ENCODE measurements at regions of chr3 and their contacts with region 1.

Region 1: GRCh38 chr3:150408221-150409102 is at the start of gene TSC22D2:
- DNase-seq: peak; percentile 93
- ATAC-seq: peak; percentile 73
- H3K4me3 Mint-ChIP-seq: peak within 1 kb of the TSS; percentile 84
- H3K27ac Mint-ChIP-seq: peak within 1 kb of the TSS; percentile 99
- H3K4me1 Mint-ChIP-seq: peaks cover 19% of the 10 kb centered on the region
- H3K27me3 Mint-ChIP-seq: no peaks in the 10 kb centered on the region
- CTCF ChIP-seq: no peak
- total RNA-seq, gene TSC22D2: 12.3 to 16.7 TPM

Region 2: DNA sequence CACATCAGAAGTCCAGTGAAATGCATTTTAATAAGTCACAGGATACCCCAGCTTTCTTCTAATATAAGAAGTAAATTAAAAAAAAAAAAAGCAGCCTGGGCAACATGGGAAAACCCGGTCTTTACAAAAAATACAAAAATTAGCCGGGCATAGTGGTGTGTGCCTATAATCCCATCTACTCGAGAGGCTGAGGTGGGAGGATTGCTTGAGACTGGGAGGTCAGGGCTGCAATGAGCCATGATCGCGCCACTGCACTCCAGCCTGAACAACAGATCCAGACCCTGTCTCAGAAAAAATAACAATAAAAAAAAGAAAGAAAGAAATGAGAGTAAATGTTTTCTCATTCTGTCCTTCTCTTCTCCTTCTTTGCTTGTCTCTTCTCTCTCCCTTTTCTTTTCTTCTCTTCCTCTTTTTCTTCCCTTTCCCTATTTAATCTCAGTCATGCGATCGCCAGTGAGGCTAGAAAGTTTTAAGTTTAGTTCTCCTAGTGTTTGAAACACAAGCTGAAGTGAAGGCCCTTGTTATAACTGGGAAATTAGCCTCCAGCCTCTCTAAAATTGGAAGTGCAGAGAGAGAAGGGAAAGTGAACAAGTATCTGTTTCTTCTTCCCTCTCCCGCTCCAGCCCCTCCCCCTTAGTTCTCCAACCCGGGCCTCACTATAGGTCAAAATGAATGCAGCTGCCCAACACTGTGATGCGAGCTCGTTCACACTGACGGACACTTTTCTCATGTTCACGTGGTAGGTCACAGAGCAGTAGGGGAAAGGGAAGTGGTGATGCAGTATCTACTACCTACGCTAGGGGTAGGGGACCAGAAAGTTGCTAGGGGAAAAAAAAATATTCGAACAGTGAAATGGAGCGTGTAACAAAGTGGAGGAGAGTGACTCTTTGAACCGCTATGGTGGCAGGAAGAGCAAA is 23.9 kb before region 1 on chr3:
- CTCF ChIA-PET with region 1: interaction called, 20 read pairs
- POLR2A ChIA-PET with region 1: interaction called, 18 read pairs
- intact Hi-C with region 1: loop called (anchors 2 kb)
- DNase-seq: peak; percentile 81
- ATAC-seq: peak; percentile 95
- H3K4me3 Mint-ChIP-seq: peak overlapping the region; percentile 56
- H3K27ac Mint-ChIP-seq: peak overlapping the region; percentile 96
- H3K4me1 Mint-ChIP-seq: peaks cover 37% of the 10 kb centered on the region
- H3K27me3 Mint-ChIP-seq: no peaks in the 10 kb centered on the region
- CTCF ChIP-seq: peak; percentile 66

Region 3: DNA sequence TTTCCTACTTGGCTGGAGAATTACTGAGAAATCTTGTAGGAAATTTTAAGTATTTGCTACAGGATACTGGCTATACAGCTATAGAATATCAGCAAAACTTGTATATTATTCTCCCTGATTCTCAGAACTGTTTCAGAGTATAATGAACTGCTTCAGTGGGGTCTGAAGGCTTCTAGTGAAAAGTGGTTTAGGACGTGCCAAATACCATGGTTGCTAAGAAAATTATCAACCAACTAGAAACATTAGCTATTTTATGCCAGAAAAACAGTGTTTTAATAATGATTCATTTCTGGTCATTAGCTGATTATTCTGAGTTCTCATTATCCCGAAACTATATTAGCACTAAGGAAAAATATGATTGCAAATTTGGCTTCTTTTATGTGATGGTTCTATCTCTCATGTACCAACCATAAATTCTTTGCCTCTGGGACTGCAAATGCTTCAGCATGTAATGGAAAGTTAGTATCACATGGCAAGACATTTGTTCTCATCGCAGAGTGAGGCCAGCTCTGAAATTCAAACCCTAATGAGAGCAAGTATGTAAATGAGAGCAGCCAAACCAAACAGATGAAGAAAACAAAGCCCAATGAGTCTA is 11.4 kb before region 1 on chr3:
- CTCF ChIA-PET with region 1: interaction called, 6 read pairs
- POLR2A ChIA-PET with region 1: interaction called, 19 read pairs
- intact Hi-C with region 1: no loop called
- DNase-seq: no peak
- ATAC-seq: no peak
- H3K4me3 Mint-ChIP-seq: no peak overlapping the region
- H3K27ac Mint-ChIP-seq: no peak overlapping the region
- H3K4me1 Mint-ChIP-seq: no peaks in the 10 kb centered on the region
- H3K27me3 Mint-ChIP-seq: peaks cover 5% of the 10 kb centered on the region
- CTCF ChIP-seq: no peak

Region 4: DNA sequence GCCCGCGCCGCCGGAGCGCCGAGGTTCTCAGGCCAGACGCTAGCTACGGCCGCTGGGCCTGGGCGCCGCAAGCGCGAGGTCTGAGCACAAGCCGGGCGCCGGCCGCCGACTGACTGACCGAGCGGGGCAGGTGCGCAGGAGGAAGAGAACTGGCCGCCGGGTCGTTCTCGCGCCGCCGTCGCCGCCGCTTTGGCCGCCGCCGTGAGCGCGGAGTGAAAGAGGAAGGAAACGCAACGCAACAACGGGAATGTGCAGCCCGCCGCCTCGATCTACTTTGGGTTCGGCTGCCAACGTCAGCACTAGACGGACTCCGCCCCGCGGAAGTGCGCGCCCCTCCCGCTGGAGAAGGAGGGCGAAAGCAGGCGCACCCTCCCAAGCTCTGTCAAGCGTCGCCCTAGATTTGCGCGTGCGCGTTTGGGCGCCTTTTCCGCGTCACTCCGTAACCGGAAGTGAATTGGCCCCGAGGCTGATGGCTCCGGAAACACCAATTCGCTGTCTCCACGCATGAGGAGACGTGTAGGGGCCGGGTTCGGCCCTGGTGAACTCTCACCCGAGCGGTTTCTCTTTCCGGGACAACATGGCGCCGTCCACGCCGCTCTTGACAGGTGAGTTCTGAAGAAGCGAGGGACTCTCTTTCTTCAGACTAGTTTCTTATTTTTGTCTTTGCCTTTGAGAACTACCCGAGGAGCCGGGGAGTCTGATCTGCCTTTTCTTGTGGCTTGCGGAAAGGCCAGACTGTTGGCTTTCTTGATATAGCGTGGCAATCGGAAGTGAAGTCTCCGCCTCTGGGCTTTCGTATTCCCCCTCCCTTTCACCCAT is 138.0 kb after region 1 on chr3 and contains the starts of genes EIF2A and SERP1:
- CTCF ChIA-PET with region 1: interaction called, 4 read pairs
- POLR2A ChIA-PET with region 1: interaction called, 23 read pairs
- intact Hi-C with region 1: no loop called
- DNase-seq: peak; percentile 98
- ATAC-seq: peak; percentile 91
- H3K4me3 Mint-ChIP-seq: peak within 1 kb of the TSS; percentile 95
- H3K27ac Mint-ChIP-seq: peak within 1 kb of the TSS; percentile 99
- H3K4me1 Mint-ChIP-seq: peaks cover 59% of the 10 kb centered on the region
- H3K27me3 Mint-ChIP-seq: no peaks in the 10 kb centered on the region
- CTCF ChIP-seq: no peak
- total RNA-seq, gene EIF2A: 130 to 136 TPM
- total RNA-seq, gene SERP1: 115 TPM

Region 5: GRCh38 chr3:150603153-150603979 is 194.9 kb after region 1 on chr3 and contains the start of gene SELENOT:
- CTCF ChIA-PET with region 1: no interaction called
- POLR2A ChIA-PET with region 1: interaction called, 6 read pairs
- intact Hi-C with region 1: loop called (anchors 2 kb)
- DNase-seq: peak; percentile 92
- ATAC-seq: peak; percentile 90
- H3K4me3 Mint-ChIP-seq: peak within 1 kb of the TSS; percentile 91
- H3K27ac Mint-ChIP-seq: peak within 1 kb of the TSS; percentile 97
- H3K4me1 Mint-ChIP-seq: peaks cover 58% of the 10 kb centered on the region
- H3K27me3 Mint-ChIP-seq: no peaks in the 10 kb centered on the region
- CTCF ChIP-seq: peak; percentile 32
- total RNA-seq, gene SELENOT: 77.6 to 89.8 TPM

Region 6: GRCh38 chr3:150870396-150870795 is 461.9 kb after region 1 on chr3:
- CTCF ChIA-PET with region 1: no interaction called
- POLR2A ChIA-PET with region 1: no interaction called
- intact Hi-C with region 1: loop called (anchors 10 kb)
- DNase-seq: no peak
- ATAC-seq: no peak
- H3K4me3 Mint-ChIP-seq: no peak overlapping the region
- H3K27ac Mint-ChIP-seq: no peak overlapping the region
- H3K4me1 Mint-ChIP-seq: peaks cover under 1% of the 10 kb centered on the region
- H3K27me3 Mint-ChIP-seq: peaks cover 7% of the 10 kb centered on the region
- CTCF ChIP-seq: no peak